Sciatic nerve (tissue), 2 donors: ENCODE measurements at regions of chr6 and their contacts with region 1.

Region 1: DNA sequence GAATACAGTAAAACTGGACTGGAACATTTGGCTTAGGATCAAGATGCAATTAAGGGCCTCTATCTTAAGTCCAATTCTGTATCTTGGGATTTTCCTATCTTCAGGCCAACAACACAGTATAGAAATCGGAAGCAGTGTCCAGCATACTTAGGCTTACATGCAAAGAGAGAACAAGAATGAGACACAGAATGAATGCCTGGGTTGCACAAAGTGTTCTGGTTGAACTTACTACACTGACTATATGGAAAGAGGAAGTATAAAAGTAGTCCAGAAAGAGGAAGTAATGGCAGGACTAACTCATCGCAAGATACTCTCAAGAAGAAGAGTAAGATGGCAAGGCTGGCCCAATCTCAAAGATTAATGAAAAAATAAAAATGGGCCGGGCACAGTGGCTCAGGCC is 87.6 kb downstream of the BTBD9 start:
- DNase-seq: no peak
- ATAC-seq: peak; percentile 48

Region 2: DNA sequence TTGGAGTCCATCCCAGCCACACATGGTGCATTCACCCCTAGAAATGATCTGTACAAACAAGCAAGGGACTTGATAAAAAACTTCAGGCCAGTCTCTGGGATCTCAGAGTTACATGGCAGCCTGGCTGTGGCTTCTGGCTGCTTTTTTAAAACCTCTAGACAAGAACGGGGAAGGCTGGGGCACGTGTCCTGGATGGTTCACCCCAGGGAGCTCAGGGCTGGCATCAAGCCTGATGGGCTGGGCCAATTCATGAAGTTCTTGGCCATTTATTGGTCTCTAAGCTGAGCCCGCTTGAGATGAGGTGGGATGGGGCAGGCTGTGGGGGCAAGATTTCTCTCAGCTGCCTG is 743.0 kb before region 1 on chr6:
- intact Hi-C with region 1: no loop called
- DNase-seq: peak; percentile 66
- ATAC-seq: peak; percentile 67

Region 3: DNA sequence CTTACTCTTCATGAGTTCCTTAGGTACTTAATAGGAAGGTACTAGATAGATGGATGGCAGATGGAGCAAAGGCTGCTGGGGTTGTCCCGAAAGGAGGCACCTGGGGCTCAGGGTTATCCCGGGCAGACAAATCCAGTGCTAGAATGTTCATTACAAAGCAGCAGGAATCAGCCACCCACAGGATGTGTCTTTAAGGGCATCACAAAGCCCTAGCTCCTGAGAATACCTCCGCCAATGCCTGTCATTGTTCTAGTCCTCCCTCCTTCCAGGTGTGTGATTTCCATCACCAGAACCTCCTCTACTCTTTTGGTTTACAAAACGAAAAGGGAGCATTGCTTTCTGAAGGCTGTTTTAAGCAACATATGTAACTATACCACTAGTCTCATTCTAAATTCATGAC is 1035.0 kb after region 1 on chr6:
- intact Hi-C with region 1: loop called (anchors 5 kb)
- DNase-seq: no peak
- ATAC-seq: no peak